GM10248 (cell line): ENCODE measurements at regions of chr22 and their contacts with region 1.

Region 1: GRCh38 chr22:37862570-37863325 is 13.5 kb downstream of the EIF3L start:
- DNase-seq: no peak
- CTCF ChIP-seq: no peak

Region 2: DNA sequence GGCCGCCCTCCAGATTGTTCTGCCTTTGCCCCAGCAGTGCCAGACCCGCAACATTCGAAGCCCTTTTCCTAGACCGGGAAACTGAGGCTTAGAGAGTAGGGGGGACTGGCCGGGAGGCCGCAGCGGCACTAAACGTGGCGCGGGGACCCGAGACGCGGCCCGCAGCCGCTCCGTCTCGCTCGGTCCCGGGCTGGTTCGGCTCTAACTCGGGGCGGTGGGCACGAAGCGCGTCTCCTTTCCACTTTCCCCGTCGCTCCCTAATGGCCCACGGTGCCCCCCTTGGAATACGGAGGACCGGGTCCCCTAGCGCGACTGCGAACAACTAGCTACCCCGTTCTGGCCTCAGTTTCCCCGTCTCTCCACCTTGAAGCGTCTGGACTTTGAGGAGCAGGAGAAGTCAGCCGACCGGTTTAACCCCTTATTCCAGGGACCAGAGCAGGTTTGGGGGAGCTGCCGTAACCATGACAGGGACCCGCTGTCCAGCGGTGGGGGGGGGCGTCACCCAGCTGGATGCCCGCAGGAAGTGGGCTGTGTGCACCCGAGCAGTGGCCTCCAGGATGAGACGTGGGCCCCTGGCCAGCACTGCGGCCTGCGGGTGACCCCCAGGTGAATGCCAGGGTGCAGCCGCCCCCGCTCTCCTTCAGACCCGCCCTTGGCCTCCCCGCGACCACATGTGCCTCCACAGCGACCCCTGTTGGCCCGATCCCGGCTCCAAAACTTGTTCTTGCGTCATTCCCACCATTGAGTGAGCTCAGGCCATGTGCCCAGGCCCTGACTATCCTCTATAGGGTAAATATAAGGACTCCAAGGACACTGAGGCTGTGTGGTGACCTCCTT is 301.3 kb before region 1 on chr22:
- CTCF ChIA-PET with region 1: no interaction called
- POLR2A ChIA-PET with region 1: no interaction called
- DNase-seq: peak; percentile 85
- CTCF ChIP-seq: peak; percentile 64

Region 3: GRCh38 chr22:37643225-37643847 is 219.4 kb before region 1 on chr22:
- CTCF ChIA-PET with region 1: interaction called, 16 read pairs
- POLR2A ChIA-PET with region 1: no interaction called
- DNase-seq: peak; percentile 86
- CTCF ChIP-seq: peak; percentile 90

Region 4: DNA sequence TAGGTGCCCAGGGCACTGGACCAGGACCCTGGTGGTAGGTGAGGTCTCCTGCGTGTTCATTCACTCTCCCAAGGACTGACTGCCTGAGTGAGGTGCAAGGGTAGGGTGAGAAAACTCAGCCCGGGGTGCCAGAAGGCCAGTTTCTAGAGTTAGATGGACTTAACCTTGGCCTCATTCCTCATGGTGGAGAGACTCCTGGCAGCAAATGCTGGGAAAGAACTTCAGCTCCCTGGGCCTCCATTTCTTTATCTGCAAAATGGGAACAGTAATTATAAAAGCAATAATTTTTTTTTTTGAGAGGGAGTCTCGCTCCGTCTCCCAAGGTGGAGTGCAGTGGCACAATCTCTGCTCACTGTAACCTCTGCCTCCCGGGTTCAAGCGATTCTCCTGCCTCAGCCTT is 118.2 kb before region 1 on chr22:
- CTCF ChIA-PET with region 1: no interaction called
- POLR2A ChIA-PET with region 1: interaction called, 10 read pairs
- DNase-seq: no peak
- CTCF ChIP-seq: no peak

Region 5: DNA sequence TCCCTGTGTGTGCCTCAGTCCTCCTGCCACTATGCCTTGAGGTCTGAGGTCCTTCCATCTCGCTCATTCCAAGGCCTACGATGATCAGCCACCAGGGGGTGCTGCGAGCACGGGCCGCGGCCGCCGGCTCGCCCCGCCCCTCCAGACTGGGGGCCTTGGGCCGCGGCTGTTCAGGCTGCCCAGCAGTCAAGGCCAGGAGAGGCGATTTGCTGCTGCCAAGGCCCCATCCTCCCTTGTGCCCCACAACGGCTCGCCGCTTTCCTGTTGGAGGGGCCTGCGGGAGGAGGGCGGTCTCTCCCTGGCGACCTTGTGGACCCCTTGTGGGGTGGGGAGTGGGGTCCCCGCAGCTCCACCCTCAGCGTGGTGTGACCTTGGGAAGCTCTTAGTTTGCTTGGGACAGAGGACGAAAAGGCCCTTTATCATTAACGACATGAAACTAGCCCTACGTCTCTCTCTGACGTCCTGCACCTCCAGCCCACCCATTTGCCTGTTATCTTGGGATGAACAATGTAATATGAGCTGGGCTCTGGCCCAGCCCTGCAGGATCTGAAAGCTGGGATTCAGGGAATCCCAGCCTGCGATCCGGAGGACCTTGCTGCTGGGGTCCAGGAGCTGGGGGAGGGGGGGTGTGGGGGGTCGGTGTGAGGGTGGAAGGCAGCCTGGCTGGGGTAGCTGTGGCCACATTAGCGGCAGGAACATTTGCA is 44.9 kb before region 1 on chr22:
- CTCF ChIA-PET with region 1: interaction called, 123 read pairs
- POLR2A ChIA-PET with region 1: no interaction called
- DNase-seq: peak; percentile 92
- CTCF ChIP-seq: peak; percentile 94

Region 6: DNA sequence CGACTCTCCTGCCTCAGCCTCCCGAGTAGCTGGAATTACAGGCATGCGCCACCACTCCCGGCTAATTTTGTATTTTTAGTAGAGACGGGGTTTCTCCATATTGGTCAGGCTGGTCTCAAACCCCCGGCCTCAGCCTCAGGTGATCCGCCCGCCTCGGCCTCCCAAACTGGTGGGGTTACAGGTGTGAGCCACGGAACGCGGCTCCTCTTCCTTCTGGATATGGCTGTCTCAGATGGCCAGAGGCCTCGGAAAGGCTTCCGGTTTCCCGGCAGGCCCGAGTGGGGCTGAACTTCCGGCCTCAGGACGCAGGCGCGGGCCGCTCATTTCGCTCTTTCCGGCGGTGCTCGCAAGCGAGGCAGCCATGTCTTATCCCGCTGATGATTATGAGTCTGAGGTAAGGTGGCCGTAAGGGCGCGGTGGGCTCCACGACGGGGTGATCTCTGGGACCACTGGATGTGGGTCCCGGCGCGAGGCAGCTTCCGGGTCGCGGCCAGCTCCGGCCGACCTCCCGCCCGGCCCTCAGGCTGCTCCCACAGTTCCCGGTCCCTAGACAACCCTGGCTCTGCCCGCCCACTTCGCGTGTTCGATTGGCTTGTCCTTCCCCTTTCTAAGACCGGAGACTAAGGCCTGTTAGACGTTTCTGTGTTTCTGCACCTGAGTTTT is 13.5 kb before region 1 on chr22 and contains the start of gene EIF3L:
- CTCF ChIA-PET with region 1: interaction called, 39 read pairs
- POLR2A ChIA-PET with region 1: interaction called, 5 read pairs
- DNase-seq: peak; percentile 94
- CTCF ChIP-seq: no peak

Region 7: DNA sequence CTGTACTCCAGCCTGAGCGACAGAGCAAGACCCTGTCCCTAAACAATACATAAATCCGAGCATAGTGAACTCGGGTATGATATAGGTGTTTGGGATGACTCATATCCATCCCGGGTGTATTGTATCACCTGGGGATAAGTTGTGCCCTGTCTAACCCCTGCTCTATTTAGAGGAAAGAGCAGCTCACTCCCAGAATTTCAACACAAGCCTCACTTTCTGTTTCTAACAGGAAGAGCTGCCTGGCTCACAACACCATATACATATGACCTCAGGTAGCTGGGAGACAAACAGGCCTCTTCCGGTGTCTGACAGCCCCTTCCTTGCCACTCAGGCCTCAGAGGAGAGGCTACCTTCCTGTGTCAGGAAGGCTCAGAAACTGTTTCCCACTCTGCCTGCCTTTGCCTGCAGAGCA is 33.4 kb after region 1 on chr22:
- CTCF ChIA-PET with region 1: interaction called, 10 read pairs
- POLR2A ChIA-PET with region 1: no interaction called
- DNase-seq: peak; percentile 82
- CTCF ChIP-seq: no peak

Region 8: DNA sequence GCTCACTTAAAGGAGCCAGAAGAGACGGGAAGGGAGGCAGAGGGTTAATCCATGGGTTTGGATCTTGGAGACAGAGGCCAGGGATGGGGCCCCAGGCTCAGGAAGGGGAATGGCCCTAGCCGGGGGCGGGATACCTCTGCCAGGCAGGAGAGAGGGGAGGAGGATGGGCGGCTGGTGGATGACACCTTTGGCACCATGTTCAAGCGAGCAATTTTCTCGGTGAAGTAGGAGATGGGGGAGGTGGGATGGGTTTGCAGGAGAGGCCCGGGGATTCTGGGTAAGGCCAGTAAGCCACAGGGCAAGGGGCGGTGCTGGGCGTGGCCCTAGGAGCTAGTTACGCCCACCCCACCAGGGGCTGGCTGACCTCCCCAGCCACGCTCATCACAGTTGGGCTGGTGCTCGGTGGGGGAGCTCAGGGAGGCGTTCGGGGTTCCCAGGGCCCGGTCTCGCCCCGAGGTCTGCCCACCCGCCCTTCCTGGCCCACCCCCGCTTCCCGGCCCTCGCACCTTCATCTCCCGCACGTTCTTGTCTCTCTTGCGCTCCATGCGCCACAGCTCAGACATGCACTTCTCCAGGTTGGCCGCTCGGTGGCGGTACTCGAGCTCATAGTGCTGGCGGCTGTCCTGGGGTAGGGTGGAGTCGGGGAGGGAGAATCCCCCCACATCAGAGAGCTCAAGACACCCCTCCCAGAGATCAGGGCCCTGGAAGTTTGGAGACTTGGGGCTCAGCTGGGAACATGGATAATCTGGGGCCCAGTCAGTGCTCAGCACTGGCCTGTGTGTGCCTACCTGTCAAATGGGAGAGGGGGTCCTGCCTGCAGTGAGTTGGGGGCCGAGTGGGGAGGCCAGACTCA is 235.0 kb after region 1 on chr22:
- CTCF ChIA-PET with region 1: no interaction called
- POLR2A ChIA-PET with region 1: no interaction called
- DNase-seq: no peak
- CTCF ChIP-seq: no peak